IMR-90 (cell line): ENCODE measurements at regions of chr2 and their contacts with region 1.

Region 1: DNA sequence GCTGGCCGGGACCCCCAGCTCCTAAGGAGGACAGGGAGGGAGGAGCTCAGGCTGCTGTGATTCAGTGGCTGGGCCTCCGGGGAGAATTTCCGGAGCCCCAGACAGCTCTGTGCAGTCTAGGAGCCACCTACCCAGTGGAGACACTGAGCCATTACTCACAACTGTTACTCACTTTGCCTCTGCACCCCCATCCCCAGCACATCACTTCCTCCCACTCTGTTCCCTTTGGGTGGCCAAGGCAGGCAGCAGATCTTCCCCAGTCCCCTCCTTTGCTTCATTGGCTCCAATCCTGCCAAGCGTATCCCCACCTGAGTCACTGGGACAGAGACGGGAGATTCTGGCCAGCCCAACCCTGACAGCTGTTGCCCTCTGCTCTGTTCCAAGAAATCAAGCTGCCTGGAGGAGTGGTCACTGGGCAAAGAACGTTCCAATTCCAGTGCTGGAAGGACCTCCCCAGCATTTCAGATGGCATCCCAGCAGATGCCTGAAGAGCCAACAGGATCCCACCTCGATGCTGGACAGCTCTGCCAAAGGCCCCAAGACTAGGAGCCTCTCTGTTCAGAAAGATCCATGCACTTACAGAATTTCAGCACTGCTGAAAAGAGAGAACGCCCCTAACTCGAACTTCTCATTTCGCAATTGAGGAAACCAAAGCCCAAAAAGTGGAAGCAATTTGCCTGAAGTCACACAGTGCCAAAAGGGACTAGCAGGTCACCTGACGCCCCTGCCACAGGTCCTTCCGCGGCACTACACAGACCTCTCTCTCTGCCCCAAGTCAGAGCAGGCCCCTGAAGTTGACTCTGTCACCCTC is 68.3 kb downstream of the TNS1 start:
- DNase-seq: peak; percentile 96
- ATAC-seq: peak; percentile 75
- H3K4me3 ChIP-seq: no peak overlapping the region
- H3K27ac ChIP-seq: peak overlapping the region; percentile 84
- H3K4me1 ChIP-seq: peaks cover 71% of the 10 kb centered on the region
- H3K27me3 ChIP-seq: no peaks in the 10 kb centered on the region
- CTCF ChIP-seq: no peak
- POLR2A ChIP-seq: peak; percentile 51; the same call in 1 of the 2 replicates
- RAD21 ChIP-seq: peak; percentile 8

Region 2: GRCh38 chr2:216445501-216445900 is 1489.0 kb before region 1 on chr2:
- CTCF ChIA-PET with region 1: no interaction called
- POLR2A ChIA-PET with region 1: no interaction called
- dilution Hi-C with region 1: no loop called
- in situ Hi-C with region 1: no loop called
- intact Hi-C with region 1: no loop called
- DNase-seq: peak; percentile 7
- ATAC-seq: no peak
- H3K4me3 ChIP-seq: no peak overlapping the region
- H3K27ac ChIP-seq: no peak overlapping the region
- H3K4me1 ChIP-seq: no peaks in the 10 kb centered on the region; the same call in 1 of the 2 replicates
- H3K27me3 ChIP-seq: no peaks in the 10 kb centered on the region
- CTCF ChIP-seq: no peak
- POLR2A ChIP-seq: no peak
- RAD21 ChIP-seq: no peak

Region 3: DNA sequence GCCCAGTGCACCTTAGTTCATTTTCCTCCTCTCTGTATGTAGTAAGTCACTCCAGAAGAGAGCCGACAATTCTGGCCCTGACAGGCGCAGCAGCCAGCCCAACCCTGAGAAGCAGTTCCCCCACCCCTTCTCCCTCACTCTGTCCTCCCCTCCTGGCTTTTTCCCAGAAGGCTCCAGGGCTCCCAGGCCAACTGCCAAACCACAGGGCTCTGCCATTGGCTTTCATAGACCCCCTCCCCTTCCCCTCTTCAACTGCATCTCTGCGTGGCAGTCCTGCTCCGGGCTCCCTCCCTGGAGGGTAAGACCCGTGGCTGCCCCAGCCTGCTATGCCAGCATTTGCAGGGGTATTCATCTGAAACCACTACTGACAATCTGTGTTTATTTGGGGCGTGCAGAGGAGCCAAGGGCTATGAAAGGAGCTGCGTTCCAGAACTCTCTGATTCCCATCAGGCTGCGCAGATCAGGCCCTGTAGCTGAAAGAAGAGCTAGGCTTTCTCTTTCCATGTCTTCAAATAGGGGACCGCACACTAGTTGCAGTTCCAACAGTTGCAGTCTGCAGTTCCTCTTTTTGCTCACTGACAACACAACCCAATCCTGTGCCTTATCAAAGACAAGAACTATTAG is 686.1 kb before region 1 on chr2:
- CTCF ChIA-PET with region 1: no interaction called
- POLR2A ChIA-PET with region 1: no interaction called
- dilution Hi-C with region 1: no loop called
- in situ Hi-C with region 1: no loop called
- intact Hi-C with region 1: no loop called
- DNase-seq: peak; percentile 74
- ATAC-seq: peak; percentile 78
- H3K4me3 ChIP-seq: no peak overlapping the region
- H3K27ac ChIP-seq: peak overlapping the region; percentile 73
- H3K4me1 ChIP-seq: peaks cover 34% of the 10 kb centered on the region
- H3K27me3 ChIP-seq: no peaks in the 10 kb centered on the region
- CTCF ChIP-seq: no peak
- POLR2A ChIP-seq: no peak
- RAD21 ChIP-seq: no peak

Region 4: GRCh38 chr2:217886720-217887309 is 47.7 kb before region 1 on chr2:
- CTCF ChIA-PET with region 1: no interaction called
- POLR2A ChIA-PET with region 1: no interaction called
- dilution Hi-C with region 1: no loop called
- in situ Hi-C with region 1: no loop called
- intact Hi-C with region 1: loop called (anchors 1 kb)
- DNase-seq: peak; percentile 73
- ATAC-seq: peak; percentile 57; the same call in 1 of the 2 replicates
- H3K4me3 ChIP-seq: no peak overlapping the region
- H3K27ac ChIP-seq: no peak overlapping the region
- H3K4me1 ChIP-seq: no peaks in the 10 kb centered on the region
- H3K27me3 ChIP-seq: no peaks in the 10 kb centered on the region
- CTCF ChIP-seq: peak; percentile 76
- POLR2A ChIP-seq: no peak
- RAD21 ChIP-seq: peak; percentile 74

Region 5: DNA sequence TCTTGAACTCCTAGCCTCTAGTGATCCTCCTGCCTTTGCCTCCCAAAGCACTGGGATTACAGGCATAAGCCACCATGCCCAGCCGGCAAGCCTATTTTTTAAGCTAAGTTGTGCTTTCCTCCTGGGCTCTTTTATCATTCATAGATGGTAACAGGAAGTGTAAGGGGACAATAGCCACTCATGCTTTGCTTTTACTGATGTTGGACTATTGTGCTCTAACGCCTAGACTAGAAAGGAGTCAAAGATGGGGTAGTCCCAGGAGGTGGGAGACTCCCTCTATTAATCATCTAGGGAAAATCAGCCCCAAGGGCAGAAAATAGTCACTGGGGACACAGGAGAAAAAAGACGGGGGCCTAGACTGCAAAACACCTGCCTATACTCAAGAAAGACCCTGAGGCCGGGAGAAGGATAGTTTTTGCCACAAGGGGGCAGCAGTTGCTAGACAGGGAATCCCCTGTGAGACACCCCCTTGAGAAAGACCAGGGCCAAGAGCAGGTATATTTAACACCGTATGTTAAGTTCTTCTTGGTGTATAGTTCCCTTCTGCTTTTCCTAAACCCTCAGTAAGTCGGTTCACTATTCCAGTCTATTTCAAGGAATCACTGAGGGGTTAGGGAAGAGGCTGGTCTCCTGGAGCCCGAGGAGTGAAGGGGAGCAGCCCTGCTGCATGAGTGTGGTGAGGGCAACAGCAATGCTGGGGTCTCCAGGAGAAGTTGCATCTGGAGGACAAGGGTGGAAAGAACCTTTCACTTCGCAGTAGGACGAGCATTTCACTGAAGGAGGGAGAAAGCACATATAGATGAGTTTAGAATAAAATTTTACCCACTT is 234.3 kb after region 1 on chr2:
- CTCF ChIA-PET with region 1: no interaction called
- POLR2A ChIA-PET with region 1: no interaction called
- dilution Hi-C with region 1: no loop called
- in situ Hi-C with region 1: no loop called
- intact Hi-C with region 1: no loop called
- DNase-seq: peak; percentile 18
- ATAC-seq: peak; percentile 54; the same call in 1 of the 2 replicates
- H3K4me3 ChIP-seq: no peak overlapping the region
- H3K27ac ChIP-seq: no peak overlapping the region
- H3K4me1 ChIP-seq: peaks cover 1% of the 10 kb centered on the region; the same call in 1 of the 2 replicates
- H3K27me3 ChIP-seq: peaks cover 35% of the 10 kb centered on the region
- CTCF ChIP-seq: peak; percentile 52
- POLR2A ChIP-seq: no peak
- RAD21 ChIP-seq: peak; percentile 39